PC-3 (cell line): ENCODE measurements at regions of chr2 and their contacts with region 1.

Region 1: GRCh38 chr2:42040643-42041278 is 7.1 kb upstream of the PKDCC start:
- DNase-seq: no peak
- ATAC-seq: no peak
- H3K4me3 ChIP-seq: no peak overlapping the region
- H3K27ac ChIP-seq: no peak overlapping the region
- H3K4me1 ChIP-seq: no peaks in the 10 kb centered on the region
- H3K27me3 ChIP-seq: peaks cover 4% of the 10 kb centered on the region; the same call in 1 of the 2 replicates
- CTCF ChIP-seq: no peak; the same call in 1 of the 2 replicates

Region 2: GRCh38 chr2:41886145-41886664 is 154.6 kb before region 1 on chr2:
- CTCF ChIA-PET with region 1: no interaction called
- POLR2A ChIA-PET with region 1: interaction called, 25 read pairs
- intact Hi-C with region 1: no loop called
- DNase-seq: no peak
- ATAC-seq: no peak
- H3K4me3 ChIP-seq: no peak overlapping the region
- H3K27ac ChIP-seq: no peak overlapping the region
- H3K4me1 ChIP-seq: no peaks in the 10 kb centered on the region
- H3K27me3 ChIP-seq: peaks cover 15% of the 10 kb centered on the region
- CTCF ChIP-seq: no peak